ENCODE measurements at regions of chr5 and their contacts with region 1.

Region 1: DNA sequence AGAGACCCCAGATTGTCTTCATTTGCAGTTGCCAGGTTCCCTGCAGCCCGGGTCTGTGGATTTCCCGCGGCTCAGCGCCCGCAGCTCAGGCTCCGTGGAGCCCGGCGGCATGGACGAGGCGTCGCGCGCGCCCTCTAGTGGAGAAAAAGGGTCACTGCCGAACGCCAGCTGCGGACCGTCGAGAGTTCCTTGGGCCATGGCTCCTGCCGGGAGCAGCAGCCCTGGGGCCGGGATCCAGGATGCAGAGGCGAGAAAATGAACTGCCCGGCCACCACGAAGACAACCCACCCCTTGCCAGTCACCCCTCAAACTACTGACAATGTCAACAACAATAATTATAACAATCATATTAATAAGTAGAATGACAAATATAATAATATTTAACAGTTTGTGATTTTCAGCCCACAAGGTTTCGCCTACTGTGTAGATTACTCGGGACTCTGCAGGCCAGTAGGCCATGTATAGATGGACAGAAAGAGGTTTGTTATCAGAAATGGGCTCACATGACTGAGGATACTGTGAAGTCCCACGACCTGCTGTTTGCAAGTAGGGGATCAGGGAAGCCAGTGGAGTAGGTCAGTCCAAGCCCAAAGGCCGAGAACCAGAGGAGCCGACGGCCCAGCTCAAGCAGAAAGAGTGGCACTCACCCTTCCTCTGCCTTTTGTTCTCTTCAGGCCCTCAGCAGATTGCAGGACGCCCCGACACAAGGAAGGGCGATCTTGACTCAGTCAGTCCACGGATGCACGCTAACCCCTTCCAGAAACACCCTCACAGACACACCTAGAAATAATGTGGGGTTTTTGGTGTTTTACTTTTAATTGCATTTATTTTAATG is 43.1 kb downstream of the BOD1 start:
- DNase-seq: peak; percentile 75
- H3K4me3 Mint-ChIP-seq: peak overlapping the region; percentile 7
- H3K27ac Mint-ChIP-seq: no peak overlapping the region
- H3K4me1 Mint-ChIP-seq: peaks cover 12% of the 10 kb centered on the region
- H3K27me3 Mint-ChIP-seq: no peaks in the 10 kb centered on the region
- CTCF ChIP-seq: peak; percentile 99

Region 2: DNA sequence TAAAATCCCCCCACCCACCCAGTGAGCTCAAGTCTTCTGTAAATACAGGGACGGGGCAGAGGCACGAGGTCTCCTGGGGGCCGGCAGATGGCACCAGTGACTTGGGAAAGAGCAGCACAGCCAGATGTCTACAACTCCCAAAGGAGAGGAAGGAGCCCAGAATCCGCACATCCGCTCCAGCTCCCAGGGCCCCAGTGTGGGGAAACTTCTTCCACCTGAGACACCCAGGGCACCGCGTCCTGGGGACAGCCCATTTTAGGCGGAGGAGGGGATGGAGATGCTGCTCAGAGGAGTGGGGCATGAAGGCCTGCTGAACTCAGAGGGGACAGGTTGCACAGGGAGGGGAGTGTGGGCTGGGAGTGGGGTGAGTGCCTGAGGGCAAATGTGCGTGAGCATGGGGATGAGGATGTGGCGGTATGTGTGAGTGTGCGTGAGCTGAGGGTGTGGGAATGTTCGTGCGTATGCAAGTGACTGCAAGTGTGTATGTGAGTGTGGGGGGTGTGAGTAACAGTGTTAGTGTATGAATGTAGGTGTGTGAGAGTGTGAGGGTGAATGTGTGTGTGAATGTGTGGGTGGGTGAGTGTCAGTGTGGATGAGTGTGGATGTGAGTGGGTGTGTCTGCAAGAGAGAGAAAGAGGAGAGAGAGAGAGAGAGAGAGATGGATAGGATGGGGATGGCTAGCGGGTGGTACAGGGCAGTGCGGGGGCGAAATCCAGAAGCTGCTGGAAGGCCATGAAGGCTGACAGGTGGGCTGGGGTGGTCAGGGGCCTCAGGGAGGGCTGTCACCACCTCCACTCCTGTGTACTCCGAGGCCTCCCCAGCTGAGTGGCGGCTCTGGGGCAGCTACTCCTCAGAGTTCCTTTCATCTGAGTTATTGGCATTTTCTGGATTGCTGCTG is 865.8 kb before region 1 on chr5:
- CTCF ChIA-PET with region 1: no interaction called
- POLR2A ChIA-PET with region 1: no interaction called
- intact Hi-C with region 1: loop called (anchors 5 kb)
- DNase-seq: peak; percentile 89
- H3K4me3 Mint-ChIP-seq: no peak overlapping the region
- H3K27ac Mint-ChIP-seq: no peak overlapping the region
- H3K4me1 Mint-ChIP-seq: peaks cover 7% of the 10 kb centered on the region
- H3K27me3 Mint-ChIP-seq: no peaks in the 10 kb centered on the region
- CTCF ChIP-seq: peak; percentile 88

Region 3: DNA sequence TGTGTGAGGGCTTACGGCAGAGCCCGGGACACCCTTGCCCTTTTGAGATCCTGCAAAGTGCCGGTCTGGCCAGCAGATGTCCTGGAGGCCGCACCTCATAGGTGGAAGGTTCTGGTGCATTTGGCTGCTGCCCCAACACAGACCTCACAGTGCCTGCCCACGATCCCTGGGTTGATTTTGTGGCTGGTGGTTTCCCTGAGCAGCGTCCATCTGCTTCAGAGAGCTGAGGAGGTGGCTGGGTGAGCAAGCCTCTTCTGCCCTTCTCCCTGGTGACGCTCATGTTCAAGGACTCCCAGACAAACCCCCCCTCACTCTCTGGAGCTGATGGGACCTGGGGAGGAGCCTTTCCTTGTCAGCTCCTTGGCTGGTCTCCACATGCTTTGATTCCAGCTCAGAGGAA is 410.1 kb before region 1 on chr5:
- CTCF ChIA-PET with region 1: interaction called, 6 read pairs
- POLR2A ChIA-PET with region 1: no interaction called
- intact Hi-C with region 1: loop called (anchors 1 kb)
- DNase-seq: no peak
- H3K4me3 Mint-ChIP-seq: no peak overlapping the region
- H3K27ac Mint-ChIP-seq: no peak overlapping the region
- H3K4me1 Mint-ChIP-seq: no peaks in the 10 kb centered on the region
- H3K27me3 Mint-ChIP-seq: no peaks in the 10 kb centered on the region
- CTCF ChIP-seq: no peak

Region 4: GRCh38 chr5:173302547-173303066 is 270.7 kb before region 1 on chr5:
- CTCF ChIA-PET with region 1: interaction called, 10 read pairs
- POLR2A ChIA-PET with region 1: interaction called, 5 read pairs
- intact Hi-C with region 1: no loop called
- DNase-seq: peak; percentile 95
- H3K4me3 Mint-ChIP-seq: peak overlapping the region; percentile 33
- H3K27ac Mint-ChIP-seq: peak overlapping the region; percentile 61
- H3K4me1 Mint-ChIP-seq: peaks cover 29% of the 10 kb centered on the region
- H3K27me3 Mint-ChIP-seq: no peaks in the 10 kb centered on the region
- CTCF ChIP-seq: no peak

Region 5: GRCh38 chr5:173396311-173396993 is 176.9 kb before region 1 on chr5:
- CTCF ChIA-PET with region 1: interaction called, 6 read pairs
- POLR2A ChIA-PET with region 1: no interaction called
- intact Hi-C with region 1: loop called (anchors 5 kb)
- DNase-seq: peak; percentile 15
- H3K4me3 Mint-ChIP-seq: no peak overlapping the region
- H3K27ac Mint-ChIP-seq: no peak overlapping the region
- H3K4me1 Mint-ChIP-seq: no peaks in the 10 kb centered on the region
- H3K27me3 Mint-ChIP-seq: no peaks in the 10 kb centered on the region
- CTCF ChIP-seq: peak; percentile 13

Region 6: GRCh38 chr5:173486355-173487225 is 86.8 kb before region 1 on chr5:
- CTCF ChIA-PET with region 1: no interaction called
- POLR2A ChIA-PET with region 1: no interaction called
- intact Hi-C with region 1: no loop called
- DNase-seq: no peak
- H3K4me3 Mint-ChIP-seq: no peak overlapping the region
- H3K27ac Mint-ChIP-seq: no peak overlapping the region
- H3K4me1 Mint-ChIP-seq: peaks cover 7% of the 10 kb centered on the region
- H3K27me3 Mint-ChIP-seq: no peaks in the 10 kb centered on the region
- CTCF ChIP-seq: no peak

Region 7: DNA sequence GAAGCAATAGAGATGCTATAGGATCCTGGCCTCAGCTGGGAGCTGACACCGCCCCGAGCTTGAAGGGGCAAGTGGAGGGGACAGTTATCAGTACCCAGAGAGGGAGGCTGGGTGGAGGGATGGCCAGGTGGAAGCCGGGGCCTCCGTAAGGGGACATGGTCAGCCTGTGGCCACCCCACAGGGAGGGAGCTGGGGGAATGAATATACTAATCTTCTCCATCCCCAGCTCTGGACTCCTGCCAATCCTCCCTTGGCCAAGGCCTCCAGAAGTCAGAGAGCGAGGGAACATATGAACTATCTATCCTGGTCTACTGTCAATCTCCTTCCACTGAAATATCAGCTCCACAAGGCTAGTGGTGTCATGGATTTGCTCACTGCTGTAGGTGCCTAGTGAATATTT is 66.2 kb before region 1 on chr5:
- CTCF ChIA-PET with region 1: interaction called, 10 read pairs
- POLR2A ChIA-PET with region 1: no interaction called
- intact Hi-C with region 1: no loop called
- DNase-seq: no peak
- H3K4me3 Mint-ChIP-seq: no peak overlapping the region
- H3K27ac Mint-ChIP-seq: no peak overlapping the region
- H3K4me1 Mint-ChIP-seq: no peaks in the 10 kb centered on the region
- H3K27me3 Mint-ChIP-seq: no peaks in the 10 kb centered on the region
- CTCF ChIP-seq: no peak

Region 8: DNA sequence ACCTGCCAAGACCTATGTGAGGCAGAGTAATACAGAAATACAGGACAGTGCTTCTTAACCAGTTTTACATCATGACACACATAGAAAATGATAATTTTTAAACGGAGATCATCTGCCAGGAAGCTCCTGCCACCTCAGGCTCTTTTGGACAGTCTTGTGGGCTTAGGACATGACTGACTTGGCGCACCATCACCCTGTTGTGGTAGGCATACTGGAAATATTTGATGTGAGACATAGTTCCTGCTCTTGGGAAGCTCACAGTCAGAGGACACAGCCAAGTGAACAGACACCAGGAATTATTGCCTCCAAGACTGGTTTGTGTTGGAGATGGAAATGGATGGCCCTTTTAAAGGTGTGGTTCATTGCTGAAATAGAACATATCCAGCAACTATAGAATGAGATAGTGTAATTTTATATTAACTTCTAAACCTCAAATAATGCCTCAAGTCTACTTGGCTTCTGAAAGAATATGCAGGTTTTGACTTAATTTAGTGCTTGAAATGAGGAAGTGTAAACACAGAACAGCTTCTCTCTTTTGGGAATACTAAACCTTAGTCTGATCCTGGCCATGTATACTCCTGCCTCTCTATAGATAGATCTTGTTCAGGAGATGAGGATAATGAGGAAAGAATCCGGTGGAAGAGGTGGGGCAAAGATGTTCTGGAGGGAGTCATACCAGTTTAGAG is 334.5 kb after region 1 on chr5:
- CTCF ChIA-PET with region 1: no interaction called
- POLR2A ChIA-PET with region 1: no interaction called
- intact Hi-C with region 1: no loop called
- DNase-seq: no peak
- H3K4me3 Mint-ChIP-seq: no peak overlapping the region
- H3K27ac Mint-ChIP-seq: peak overlapping the region; percentile 11
- H3K4me1 Mint-ChIP-seq: peaks cover 28% of the 10 kb centered on the region
- H3K27me3 Mint-ChIP-seq: no peaks in the 10 kb centered on the region
- CTCF ChIP-seq: no peak